Psoas muscle (tissue), 8 donors: ENCODE measurements at regions of chr15 and their contacts with region 1.

Region 1: GRCh38 chr15:62378772-62379498 is 213.8 kb upstream of the C2CD4B start:
- DNase-seq: no peak
- ATAC-seq: peak in 1 of 4 donors; percentile 40
- H3K4me3 ChIP-seq: no peak overlapping the region
- H3K27ac ChIP-seq: no peak overlapping the region
- H3K4me1 ChIP-seq: no peaks in the 10 kb centered on the region
- H3K27me3 ChIP-seq: no peaks in the 10 kb centered on the region
- CTCF ChIP-seq: no peak

Region 2: DNA sequence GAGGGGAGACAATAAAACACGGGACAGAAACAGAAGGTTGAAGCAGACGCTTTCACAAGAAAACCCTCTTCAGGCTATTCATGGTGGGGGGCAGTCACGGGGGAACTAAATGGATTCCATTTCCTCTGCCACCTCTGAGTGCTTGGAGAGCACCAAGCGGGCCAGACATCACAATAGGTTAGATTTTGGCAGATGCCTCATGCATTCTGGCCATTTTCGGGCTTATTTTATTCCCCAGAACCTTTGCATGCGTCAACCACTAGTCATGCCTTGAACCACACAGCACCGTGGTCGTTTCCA is 1232.1 kb before region 1 on chr15:
- intact Hi-C with region 1: no loop called
- DNase-seq: no peak
- ATAC-seq: no peak
- H3K4me3 ChIP-seq: no peak overlapping the region
- H3K27ac ChIP-seq: no peak overlapping the region
- H3K4me1 ChIP-seq: peaks cover 6% of the 10 kb centered on the region
- H3K27me3 ChIP-seq: no peaks in the 10 kb centered on the region
- CTCF ChIP-seq: no peak

Region 3: DNA sequence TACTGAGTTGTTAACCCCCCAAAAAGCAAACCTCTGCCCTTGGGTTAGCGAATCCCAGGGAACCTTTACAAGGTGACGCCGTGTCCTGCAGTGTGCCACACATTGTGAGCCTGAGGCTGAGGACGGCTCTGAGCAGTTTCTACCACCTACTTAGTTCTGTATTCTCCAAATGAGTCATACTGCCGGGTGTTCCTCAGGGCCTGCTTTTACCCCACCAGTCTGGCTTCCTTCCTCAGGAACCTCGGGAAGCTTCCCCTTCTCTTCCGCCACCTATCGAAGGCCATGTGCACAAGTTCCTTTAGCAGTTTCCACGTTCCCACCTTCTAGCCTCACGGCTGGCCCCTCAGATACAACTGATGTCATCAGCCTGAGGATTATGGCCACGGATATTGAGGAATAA is 279.6 kb after region 1 on chr15:
- intact Hi-C with region 1: loop called in 1 of 2 experiments (anchors 5 kb)
- DNase-seq: no peak
- ATAC-seq: peak in 3 of 4 donors; percentile 37 to 64 (median 60)
- H3K4me3 ChIP-seq: no peak overlapping the region
- H3K27ac ChIP-seq: no peak overlapping the region
- H3K4me1 ChIP-seq: no peaks in the 10 kb centered on the region
- H3K27me3 ChIP-seq: no peaks in the 10 kb centered on the region
- CTCF ChIP-seq: no peak